ENCODE measurements at regions of chr12 and their contacts with region 1.

Region 1: DNA sequence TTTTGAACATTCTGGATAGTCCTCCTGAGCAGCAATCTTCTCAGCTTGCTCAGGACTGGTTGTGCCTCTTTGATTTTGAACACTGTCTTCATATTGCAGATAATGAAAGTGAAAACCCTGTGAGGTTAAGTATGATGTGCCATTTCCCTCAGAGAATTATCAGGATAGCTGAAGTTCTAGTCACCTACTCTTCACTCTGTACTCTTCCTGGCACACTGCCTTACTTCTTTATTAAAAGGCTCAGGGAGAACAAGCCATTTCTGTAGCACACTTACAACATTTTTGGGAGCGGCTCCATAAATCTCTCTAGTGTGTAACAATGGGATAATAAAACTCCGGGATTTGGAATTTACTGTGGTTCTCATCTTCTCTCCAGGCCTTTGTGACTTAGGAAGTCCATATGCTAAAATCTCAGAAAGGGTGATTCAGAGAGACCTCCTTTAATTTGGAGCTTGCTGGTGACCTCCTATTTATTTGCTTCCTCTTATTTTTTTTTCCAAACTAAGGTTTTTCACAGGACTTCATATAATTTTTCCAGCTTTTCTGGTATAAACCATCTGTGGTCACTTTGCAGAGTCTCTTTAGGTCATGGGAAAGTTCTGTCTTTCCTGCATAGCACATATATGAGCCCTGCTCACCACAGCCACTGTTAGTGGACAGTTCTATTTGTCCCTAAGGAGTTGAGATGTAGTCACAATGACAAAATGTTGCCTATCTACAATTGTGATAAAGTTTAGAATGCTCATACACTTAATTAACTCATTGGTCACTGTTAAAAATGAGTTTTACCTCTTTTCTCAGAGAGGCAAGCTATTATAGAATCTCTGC is 53.5 kb upstream of the LDHB start:
- DNase-seq: peak in 1 of 2 experiments; percentile 22
- H3K4me3 ChIP-seq: no peak overlapping the region
- H3K4me1 ChIP-seq: no peaks in the 10 kb centered on the region
- H3K27me3 ChIP-seq: peaks cover 3% of the 10 kb centered on the region

Region 2: GRCh38 chr12:22018860-22019259 is 307.7 kb after region 1 on chr12:
- in situ Hi-C with region 1: loop called (anchors 25 kb)
- DNase-seq: no peak
- H3K4me3 ChIP-seq: no peak overlapping the region
- H3K4me1 ChIP-seq: no peaks in the 10 kb centered on the region
- H3K27me3 ChIP-seq: no peaks in the 10 kb centered on the region